Heart left ventricle (tissue), 16 donors: ENCODE measurements at regions of chr12 and their contacts with region 1.

Region 1: GRCh38 chr12:6965026-6965661 is 5.3 kb downstream of the PHB2 start:
- DNase-seq: peak; percentile 89 to 92 (median 90)
- ATAC-seq: peak; percentile 68 to 79 (median 72)
- H3K4me3 ChIP-seq: no peak overlapping the region
- H3K27ac ChIP-seq: peak overlapping the region; percentile 18 to 81 (median 66)
- H3K4me1 ChIP-seq: peaks cover 6 to 56% (median 43%) of the 10 kb centered on the region in 12 donors
- H3K27me3 ChIP-seq: no peaks in the 10 kb centered on the region
- CTCF ChIP-seq: peak; percentile 87 to 96 (median 92)
- POLR2A ChIP-seq: no peak

Region 2: DNA sequence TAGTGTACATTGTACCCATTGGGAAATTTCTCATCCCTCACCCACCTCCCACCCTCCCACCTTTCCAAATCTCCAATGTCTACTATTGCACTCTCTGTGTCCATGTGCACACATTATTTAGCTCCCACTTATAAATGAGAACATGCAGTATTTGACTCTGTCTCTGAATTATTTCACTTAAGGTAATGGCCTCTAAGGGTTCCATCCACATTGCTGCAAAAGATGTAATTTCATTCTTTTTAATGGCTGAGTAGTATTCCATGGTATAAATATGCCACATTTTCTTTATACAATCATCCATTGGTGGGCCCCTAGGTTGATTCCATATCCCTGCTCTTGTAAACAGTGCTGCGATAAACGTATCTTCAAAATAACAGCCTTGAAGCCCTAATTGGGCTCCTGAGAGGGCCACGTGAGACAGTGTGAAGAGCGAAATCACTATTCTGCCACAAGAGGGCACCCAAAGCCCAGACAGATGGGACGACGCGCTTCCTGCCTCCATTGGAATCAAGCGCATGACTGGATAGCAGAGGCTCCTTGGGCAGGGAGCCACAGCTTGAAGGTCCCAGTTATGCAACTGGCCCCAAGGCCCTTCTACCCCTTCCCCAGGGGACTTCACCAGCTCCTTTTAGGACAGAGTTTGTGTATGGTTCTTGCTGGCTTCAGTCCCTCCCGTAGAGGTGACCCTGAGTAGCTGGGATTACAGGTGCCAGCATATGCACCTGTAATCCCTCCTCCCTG is 541.7 kb before region 1 on chr12:
- intact Hi-C with region 1: no loop called
- DNase-seq: peak; percentile 83 to 92 (median 87)
- ATAC-seq: peak; percentile 94 to 99 (median 98)
- H3K4me3 ChIP-seq: no peak overlapping the region
- H3K27ac ChIP-seq: peak overlapping the region in 1 of 12 donors; percentile 31
- H3K4me1 ChIP-seq: peaks cover 0 to 18% (median 5%) of the 10 kb centered on the region in 12 donors
- H3K27me3 ChIP-seq: no peaks in the 10 kb centered on the region
- CTCF ChIP-seq: peak; percentile 79 to 97 (median 92)
- POLR2A ChIP-seq: no peak

Region 3: GRCh38 chr12:6873094-6874014 is 91.8 kb before region 1 on chr12 and contains the start of gene SPSB2:
- intact Hi-C with region 1: loop called in 4 of 10 experiments (anchors 2 to 10 kb)
- DNase-seq: peak; percentile 98 to 99 (median 98)
- ATAC-seq: peak; percentile 87 to 94 (median 92)
- H3K4me3 ChIP-seq: peak within 1 kb of the TSS; percentile 49 to 93 (median 74)
- H3K27ac ChIP-seq: peak within 1 kb of the TSS in 11 of 12 donors; percentile 78 to 91 (median 84)
- H3K4me1 ChIP-seq: peaks cover 15 to 50% (median 38%) of the 10 kb centered on the region in 12 donors
- H3K27me3 ChIP-seq: no peaks in the 10 kb centered on the region
- CTCF ChIP-seq: peak in 1 of 12 donors; percentile 20
- POLR2A ChIP-seq: peak; percentile 18 to 72
- total RNA-seq, gene SPSB2: 2.3 to 6.6 (median 3.1) TPM

Region 4: GRCh38 chr12:6944381-6945186 is 20.6 kb before region 1 on chr12:
- intact Hi-C with region 1: loop called in 9 of 10 experiments (anchors 1 to 2 kb)
- DNase-seq: peak; percentile 94 to 96 (median 95)
- ATAC-seq: peak; percentile 70 to 78 (median 72)
- H3K4me3 ChIP-seq: peak overlapping the region; percentile 52 to 86 (median 78)
- H3K27ac ChIP-seq: peak overlapping the region; percentile 91 to 100 (median 98)
- H3K4me1 ChIP-seq: peaks cover 0 to 64% (median 30%) of the 10 kb centered on the region in 12 donors
- H3K27me3 ChIP-seq: no peaks in the 10 kb centered on the region
- CTCF ChIP-seq: peak; percentile 68 to 96 (median 86)
- POLR2A ChIP-seq: peak in 1 of 2 donors; percentile 28

Region 5: GRCh38 chr12:7031306-7031705 is 66.2 kb after region 1 on chr12:
- intact Hi-C with region 1: loop called in 1 of 10 experiments (anchors 5 kb)
- DNase-seq: no peak
- ATAC-seq: no peak
- H3K4me3 ChIP-seq: no peak overlapping the region
- H3K27ac ChIP-seq: no peak overlapping the region
- H3K4me1 ChIP-seq: peaks cover 0 to 4% (median 0%) of the 10 kb centered on the region in 12 donors
- H3K27me3 ChIP-seq: no peaks in the 10 kb centered on the region
- CTCF ChIP-seq: no peak
- POLR2A ChIP-seq: no peak

Region 6: GRCh38 chr12:7108796-7109571 is 143.8 kb after region 1 on chr12 and contains the start of gene C1RL:
- intact Hi-C with region 1: loop called in 1 of 10 experiments (anchors 5 kb)
- DNase-seq: peak; percentile 86 to 94 (median 90)
- ATAC-seq: peak; percentile 85 to 88 (median 86)
- H3K4me3 ChIP-seq: peak within 1 kb of the TSS; percentile 31 to 76 (median 60)
- H3K27ac ChIP-seq: peak within 1 kb of the TSS; percentile 75 to 94 (median 91)
- H3K4me1 ChIP-seq: peaks cover 0 to 41% (median 10%) of the 10 kb centered on the region in 12 donors
- H3K27me3 ChIP-seq: no peaks in the 10 kb centered on the region
- CTCF ChIP-seq: peak; percentile 92 to 99 (median 97)
- POLR2A ChIP-seq: peak in 1 of 2 donors; percentile 8
- total RNA-seq, gene C1RL: 5.4 to 27.1 (median 7.9) TPM